HEK293 (cell line): ENCODE measurements at regions of chr20 and their contacts with region 1.

Region 1: GRCh38 chr20:33663161-33664094 is 1.3 kb downstream of the C20orf144 start:
- H3K4me3 ChIP-seq: peak overlapping the region; percentile 58
- H3K27ac ChIP-seq: peak overlapping the region; percentile 62; the same call in 1 of the 2 replicates
- H3K4me1 ChIP-seq: no peaks in the 10 kb centered on the region
- CTCF ChIP-seq: 0 out of 2 replicates have a peak, but pooled peaks have one; percentile 14

Region 2: DNA sequence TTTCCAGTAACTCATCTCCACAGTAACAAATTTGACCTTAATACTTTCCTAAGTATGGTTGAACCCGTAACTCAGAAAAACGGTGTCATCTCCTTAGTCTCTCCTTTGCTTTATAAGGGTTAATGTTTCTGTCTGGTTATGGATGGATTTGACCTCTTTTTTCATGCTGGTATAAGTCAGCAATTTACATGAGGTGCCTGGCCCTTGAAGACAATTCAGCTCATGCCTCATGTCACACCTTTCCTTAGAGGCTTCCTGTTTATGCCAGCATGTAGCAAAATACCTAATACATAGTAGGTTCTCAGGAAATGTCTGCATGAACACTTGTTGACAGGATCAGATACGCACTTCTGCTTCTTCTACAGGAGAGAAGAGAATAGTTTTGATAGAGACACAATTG is 39.0 kb before region 1 on chr20:
- CTCF ChIA-PET with region 1: no interaction called
- POLR2A ChIA-PET with region 1: no interaction called
- H3K4me3 ChIP-seq: no peak overlapping the region
- H3K27ac ChIP-seq: no peak overlapping the region
- H3K4me1 ChIP-seq: no peaks in the 10 kb centered on the region
- CTCF ChIP-seq: no peak

Region 3: GRCh38 chr20:33653218-33653899 is 10.1 kb before region 1 on chr20:
- CTCF ChIA-PET with region 1: interaction called, 8 read pairs
- POLR2A ChIA-PET with region 1: interaction called, 23 read pairs
- H3K4me3 ChIP-seq: no peak overlapping the region
- H3K27ac ChIP-seq: no peak overlapping the region
- H3K4me1 ChIP-seq: no peaks in the 10 kb centered on the region
- CTCF ChIP-seq: peak; percentile 93

Region 4: DNA sequence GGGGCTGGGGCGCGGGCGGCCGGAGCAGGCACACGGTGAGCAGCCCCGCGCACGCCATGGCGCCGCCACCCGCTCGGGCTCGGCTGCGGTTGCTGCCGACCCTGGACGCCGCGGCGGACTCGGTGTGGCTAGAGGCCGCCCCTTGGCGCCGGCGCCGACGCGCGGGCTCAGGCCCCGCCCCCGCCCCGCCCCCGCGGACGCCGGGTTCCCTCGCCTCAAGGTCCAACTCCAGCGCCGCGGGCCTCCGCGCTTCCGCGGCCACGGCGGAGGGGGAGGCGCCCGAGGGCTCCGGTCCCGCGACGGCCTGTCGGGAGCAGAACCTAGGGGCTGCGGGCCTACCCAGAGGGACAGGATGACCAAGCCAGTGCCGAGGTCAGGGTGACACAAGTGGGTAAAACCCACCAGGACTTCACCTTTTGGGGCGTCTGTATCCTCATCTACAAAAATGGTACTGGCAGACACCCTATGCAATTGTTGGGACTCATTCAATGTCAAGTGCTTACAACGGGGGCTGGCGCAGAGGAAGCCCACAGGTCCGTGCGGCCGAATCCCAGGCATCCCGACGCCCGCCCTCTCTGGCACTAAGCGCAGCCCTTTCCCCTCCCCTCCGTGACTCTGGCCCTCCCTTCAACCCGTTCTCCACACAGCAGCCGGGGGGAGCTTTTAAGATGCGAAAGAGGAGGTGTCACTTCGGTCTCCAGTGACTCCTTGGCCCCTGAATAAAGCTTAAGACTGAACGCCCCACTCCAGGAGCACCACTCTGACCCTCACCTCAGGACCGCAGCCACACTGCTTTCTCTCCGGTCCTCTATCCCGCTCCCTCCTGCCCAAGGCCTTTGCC is 11.1 kb after region 1 on chr20 and contains the start of gene NECAB3:
- CTCF ChIA-PET with region 1: interaction called, 6 read pairs
- POLR2A ChIA-PET with region 1: interaction called, 11 read pairs
- H3K4me3 ChIP-seq: peak within 1 kb of the TSS; percentile 61
- H3K27ac ChIP-seq: peak within 1 kb of the TSS; percentile 46
- H3K4me1 ChIP-seq: peaks cover under 1% of the 10 kb centered on the region; the same call in 1 of the 2 replicates
- CTCF ChIP-seq: no peak

Region 5: GRCh38 chr20:33686100-33686983 is 22.9 kb after region 1 on chr20 and contains the start of gene E2F1:
- CTCF ChIA-PET with region 1: interaction called, 4 read pairs
- POLR2A ChIA-PET with region 1: interaction called, 10 read pairs
- H3K4me3 ChIP-seq: peak within 1 kb of the TSS; percentile 62
- H3K27ac ChIP-seq: peak within 1 kb of the TSS; percentile 95
- H3K4me1 ChIP-seq: peaks cover 8% of the 10 kb centered on the region
- CTCF ChIP-seq: peak; percentile 69; the same call in 1 of the 2 replicates

Region 6: DNA sequence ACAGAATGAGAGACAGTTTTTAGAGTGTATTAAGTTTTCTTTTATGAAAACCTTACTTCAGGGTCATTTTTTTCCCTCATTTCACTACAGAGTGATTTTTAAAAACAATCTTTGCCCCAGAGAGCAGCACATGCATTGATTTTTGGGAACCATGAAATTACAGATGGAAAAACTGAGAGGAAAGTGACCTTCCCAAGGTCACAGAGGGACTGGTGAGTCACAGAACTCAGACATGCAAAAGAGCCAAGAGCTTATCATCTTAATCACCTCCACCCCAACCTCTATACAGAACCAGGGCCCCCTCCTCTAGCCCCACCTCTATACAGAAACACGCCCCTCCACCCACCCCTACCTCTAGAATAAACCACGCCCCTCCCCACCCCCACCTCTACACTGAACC is 46.0 kb after region 1 on chr20:
- CTCF ChIA-PET with region 1: no interaction called
- POLR2A ChIA-PET with region 1: no interaction called
- H3K4me3 ChIP-seq: no peak overlapping the region
- H3K27ac ChIP-seq: no peak overlapping the region
- H3K4me1 ChIP-seq: no peaks in the 10 kb centered on the region
- CTCF ChIP-seq: no peak

Region 7: GRCh38 chr20:34089655-34090345 is 426.4 kb after region 1 on chr20:
- CTCF ChIA-PET with region 1: no interaction called
- POLR2A ChIA-PET with region 1: no interaction called
- H3K4me3 ChIP-seq: no peak overlapping the region
- H3K27ac ChIP-seq: no peak overlapping the region
- H3K4me1 ChIP-seq: no peaks in the 10 kb centered on the region
- CTCF ChIP-seq: no peak